CD14-positive monocyte (primary cell): ENCODE measurements at regions of chr3 and their contacts with region 1.

Region 1: GRCh38 chr3:38154033-38154494 is 11.3 kb upstream of the OXSR1 start:
- DNase-seq: peak; percentile 87 to 98 (median 97)
- H3K4me3 ChIP-seq: no peak overlapping the region
- H3K4me3 Mint-ChIP-seq: no peak overlapping the region
- H3K27ac ChIP-seq: peak overlapping the region in 1 of 2 donors; percentile 95
- H3K27ac Mint-ChIP-seq: peak overlapping the region; percentile 97 to 99 (median 98)
- H3K4me1 ChIP-seq: peaks cover 73 to 74% of the 10 kb centered on the region in 2 donors
- H3K4me1 Mint-ChIP-seq: peaks cover 71% of the 10 kb centered on the region
- H3K27me3 ChIP-seq: no peaks in the 10 kb centered on the region
- H3K27me3 Mint-ChIP-seq: no peaks in the 10 kb centered on the region
- CTCF ChIP-seq: no peak

Region 2: DNA sequence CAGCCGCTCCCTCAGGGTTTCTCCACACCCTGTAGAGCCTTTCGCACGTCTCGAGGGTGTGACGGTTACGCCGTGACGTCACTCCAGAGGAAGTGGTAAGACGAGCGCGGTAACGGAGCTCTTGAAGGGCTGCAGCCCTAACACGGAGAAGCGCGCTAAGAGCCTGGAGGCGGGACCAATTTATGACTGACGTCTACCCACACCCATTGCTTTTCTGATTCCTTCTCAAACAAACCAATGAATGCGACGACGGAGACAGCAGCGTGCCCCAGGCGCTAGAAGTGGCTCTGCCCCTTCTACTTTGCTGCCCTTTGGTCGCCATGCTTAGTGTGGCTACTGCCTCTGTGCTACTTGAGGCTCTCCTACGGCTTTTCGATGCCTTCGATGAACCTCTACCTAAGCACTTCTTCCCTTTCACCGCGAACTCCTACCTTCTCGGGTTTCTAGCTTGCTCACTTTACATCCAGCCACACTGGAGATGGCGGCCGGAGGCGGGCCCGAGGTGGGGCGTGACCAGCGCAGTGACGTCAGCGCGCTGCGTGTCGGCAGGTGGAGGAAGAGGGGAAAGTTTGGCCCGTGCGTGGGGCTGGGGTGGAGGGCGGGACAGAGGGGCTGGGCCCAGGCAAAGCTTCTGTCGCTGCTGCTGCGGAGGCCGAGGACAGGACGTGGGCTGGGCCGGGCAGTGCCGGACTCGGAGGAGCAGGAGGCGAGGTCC is 11.1 kb after region 1 on chr3 and contains the start of gene OXSR1:
- intact Hi-C with region 1: loop called in 1 of 2 experiments (anchors 1 kb)
- DNase-seq: peak; percentile 100
- H3K4me3 ChIP-seq: peak within 1 kb of the TSS; percentile 61 to 94 (median 66)
- H3K4me3 Mint-ChIP-seq: peak within 1 kb of the TSS; percentile 93 to 94
- H3K27ac ChIP-seq: peak within 1 kb of the TSS; percentile 96 to 99
- H3K27ac Mint-ChIP-seq: peak within 1 kb of the TSS; percentile 99 to 100 (median 100)
- H3K4me1 ChIP-seq: peaks cover 21 to 40% of the 10 kb centered on the region in 2 donors
- H3K4me1 Mint-ChIP-seq: peaks cover 49% of the 10 kb centered on the region
- H3K27me3 ChIP-seq: no peaks in the 10 kb centered on the region
- H3K27me3 Mint-ChIP-seq: no peaks in the 10 kb centered on the region
- CTCF ChIP-seq: no peak
- polyA plus RNA-seq, gene OXSR1: 9.4 to 20.3 (median 12.3) TPM